GM13976 (cell line): ENCODE measurements at regions of chr19 and their contacts with region 1.

Region 1: DNA sequence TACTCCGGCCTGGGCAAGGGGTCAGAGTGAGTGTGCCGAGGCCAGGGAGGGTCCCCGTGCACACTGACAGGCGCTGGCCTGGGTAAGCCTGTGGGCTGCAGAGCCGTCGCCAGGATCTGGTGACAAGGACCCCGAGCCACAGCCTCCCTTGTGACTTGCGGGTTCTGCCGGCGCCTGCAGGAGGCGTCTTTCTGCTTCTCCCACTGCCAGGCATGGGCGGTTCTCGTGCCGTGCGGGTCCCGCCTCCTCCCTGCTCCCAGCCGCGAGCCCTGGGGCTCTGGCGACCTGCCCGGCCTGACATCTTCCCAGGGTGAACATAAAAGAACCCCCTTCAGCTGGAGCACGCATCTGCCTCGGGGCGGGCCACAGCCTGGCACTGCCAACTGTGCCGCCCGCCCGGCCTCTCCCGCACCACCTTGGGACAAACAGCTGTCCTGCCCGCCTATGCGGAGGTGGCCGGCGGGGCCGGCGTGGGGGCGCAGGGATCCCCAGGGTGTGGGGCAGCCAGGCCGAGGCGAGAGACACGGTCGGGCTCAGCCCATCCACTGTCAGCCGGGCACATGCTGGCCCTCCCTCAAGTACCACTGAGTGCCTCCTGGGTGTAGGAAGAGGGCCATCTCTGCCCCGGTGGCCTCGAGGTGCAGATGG is 1.5 kb upstream of the HCN2 start:
- DNase-seq: peak; percentile 79
- CTCF ChIP-seq: peak; percentile 39

Region 2: GRCh38 chr19:737581-738093 is 149.4 kb after region 1 on chr19:
- in situ Hi-C with region 1: loop called (anchors 25 kb)
- DNase-seq: peak; percentile 86
- CTCF ChIP-seq: peak; percentile 69